ENCODE measurements at regions of chr14 and their contacts with region 1.

Region 1: GRCh38 chr14:52131640-52132320 is 62.9 kb upstream of the NID2 start:
- DNase-seq: no peak
- ATAC-seq: peak; percentile 25
- H3K4me3 Mint-ChIP-seq: no peak overlapping the region
- H3K27ac Mint-ChIP-seq: no peak overlapping the region
- H3K4me1 Mint-ChIP-seq: peaks cover 7% of the 10 kb centered on the region
- H3K27me3 Mint-ChIP-seq: peaks cover 6% of the 10 kb centered on the region
- CTCF ChIP-seq: no peak

Region 2: DNA sequence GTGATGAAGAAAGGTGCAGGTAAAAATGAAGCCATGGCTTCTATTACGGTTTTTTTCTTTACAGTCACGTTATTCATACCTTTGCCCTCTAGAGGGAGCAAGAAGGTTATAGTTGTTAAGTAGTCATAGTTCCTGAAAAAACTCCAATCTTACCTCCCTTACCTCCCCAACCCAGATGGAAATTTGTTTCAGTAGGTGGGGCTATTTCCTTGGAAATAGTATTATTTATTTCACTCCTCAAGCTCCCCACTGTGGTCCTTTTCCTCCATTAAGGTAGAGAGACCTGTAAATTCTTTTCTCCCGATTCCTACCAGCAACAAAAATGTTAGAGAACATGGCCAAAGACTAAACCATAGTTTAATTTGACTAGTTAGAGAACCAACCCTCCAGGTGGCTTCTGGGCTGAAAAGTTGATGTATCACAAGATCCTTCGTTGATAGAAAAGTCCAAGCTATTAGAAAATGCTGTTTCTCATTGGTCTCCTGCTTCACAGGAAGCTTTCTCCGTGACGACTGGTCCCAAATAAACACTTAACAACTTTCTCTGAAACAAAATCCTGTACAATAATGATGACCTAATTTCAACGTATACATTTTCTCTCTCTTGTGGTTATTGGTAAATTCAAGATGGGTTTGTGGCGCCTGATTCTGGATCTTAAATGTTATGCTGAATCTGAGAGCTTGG is 848.2 kb before region 1 on chr14:
- CTCF ChIA-PET with region 1: no interaction called
- POLR2A ChIA-PET with region 1: no interaction called
- intact Hi-C with region 1: loop called (anchors 5 kb)
- DNase-seq: no peak
- ATAC-seq: peak; percentile 52
- H3K4me3 Mint-ChIP-seq: no peak overlapping the region
- H3K27ac Mint-ChIP-seq: no peak overlapping the region
- H3K4me1 Mint-ChIP-seq: peaks cover 9% of the 10 kb centered on the region
- H3K27me3 Mint-ChIP-seq: no peaks in the 10 kb centered on the region
- CTCF ChIP-seq: peak; percentile 88

Region 3: GRCh38 chr14:53491256-53491883 is 1359.6 kb after region 1 on chr14:
- CTCF ChIA-PET with region 1: no interaction called
- POLR2A ChIA-PET with region 1: no interaction called
- intact Hi-C with region 1: no loop called
- DNase-seq: no peak
- ATAC-seq: no peak
- H3K4me3 Mint-ChIP-seq: no peak overlapping the region
- H3K27ac Mint-ChIP-seq: no peak overlapping the region
- H3K4me1 Mint-ChIP-seq: no peaks in the 10 kb centered on the region
- H3K27me3 Mint-ChIP-seq: peaks cover 5% of the 10 kb centered on the region
- CTCF ChIP-seq: no peak

Measured in activated B cell treated with CpG ODN at 0.5 μM for 24 hours (primary cell).